Heart right ventricle (tissue), 16 donors: ENCODE measurements at regions of chr16 and their contacts with region 1.

Region 1: GRCh38 chr16:14309001-14309886 is 238.1 kb downstream of the MRTFB start:
- DNase-seq: no peak
- ATAC-seq: no peak
- H3K4me3 ChIP-seq: peak overlapping the region in 3 of 10 donors; percentile 2 to 8 (median 5)
- H3K27ac ChIP-seq: peak overlapping the region in 6 of 10 donors; percentile 19 to 77 (median 46)
- H3K4me1 ChIP-seq: peaks cover 0 to 71% (median 44%) of the 10 kb centered on the region in 9 donors
- H3K27me3 ChIP-seq: peaks cover 0 to 24% (median 0%) of the 10 kb centered on the region in 7 donors
- CTCF ChIP-seq: no peak

Region 2: DNA sequence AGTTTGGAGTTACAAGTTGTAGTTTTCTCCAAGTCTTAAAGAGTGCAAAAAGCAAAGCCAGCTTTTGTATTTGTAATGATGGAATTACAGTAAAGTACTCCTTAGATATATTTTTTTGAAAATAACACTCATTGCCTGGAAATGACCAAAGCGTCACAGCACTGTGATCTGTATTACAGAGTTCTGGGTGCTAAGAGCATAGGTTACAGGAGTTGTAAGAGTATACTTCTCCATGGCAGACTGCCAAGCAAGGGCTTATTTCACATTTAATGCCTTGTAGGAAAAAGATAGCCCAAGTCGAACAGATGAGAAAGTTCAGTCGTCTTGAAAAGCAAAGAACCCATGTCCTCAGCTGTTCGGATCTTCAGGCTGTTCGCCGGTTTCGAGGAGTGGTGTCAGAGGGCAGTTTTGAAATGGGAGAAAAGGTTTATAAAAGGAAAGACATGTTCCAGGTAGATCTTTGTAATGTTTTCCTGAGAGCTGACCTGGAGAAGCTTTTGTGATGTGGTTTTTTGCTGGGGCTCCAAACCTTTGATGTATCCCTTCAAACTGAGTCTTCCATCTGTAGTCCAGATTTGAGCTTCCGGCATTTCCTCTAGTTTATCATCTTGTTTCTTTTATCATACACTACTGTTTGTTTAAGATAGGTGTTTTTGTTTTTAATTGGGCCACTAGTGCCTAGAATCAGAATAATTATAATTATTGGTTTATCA is 348.0 kb before region 1 on chr16:
- intact Hi-C with region 1: no loop called
- DNase-seq: no peak
- ATAC-seq: no peak
- H3K4me3 ChIP-seq: no peak overlapping the region
- H3K27ac ChIP-seq: no peak overlapping the region
- H3K4me1 ChIP-seq: peaks cover 0 to 33% (median 15%) of the 10 kb centered on the region in 9 donors
- H3K27me3 ChIP-seq: no peaks in the 10 kb centered on the region
- CTCF ChIP-seq: no peak

Region 3: DNA sequence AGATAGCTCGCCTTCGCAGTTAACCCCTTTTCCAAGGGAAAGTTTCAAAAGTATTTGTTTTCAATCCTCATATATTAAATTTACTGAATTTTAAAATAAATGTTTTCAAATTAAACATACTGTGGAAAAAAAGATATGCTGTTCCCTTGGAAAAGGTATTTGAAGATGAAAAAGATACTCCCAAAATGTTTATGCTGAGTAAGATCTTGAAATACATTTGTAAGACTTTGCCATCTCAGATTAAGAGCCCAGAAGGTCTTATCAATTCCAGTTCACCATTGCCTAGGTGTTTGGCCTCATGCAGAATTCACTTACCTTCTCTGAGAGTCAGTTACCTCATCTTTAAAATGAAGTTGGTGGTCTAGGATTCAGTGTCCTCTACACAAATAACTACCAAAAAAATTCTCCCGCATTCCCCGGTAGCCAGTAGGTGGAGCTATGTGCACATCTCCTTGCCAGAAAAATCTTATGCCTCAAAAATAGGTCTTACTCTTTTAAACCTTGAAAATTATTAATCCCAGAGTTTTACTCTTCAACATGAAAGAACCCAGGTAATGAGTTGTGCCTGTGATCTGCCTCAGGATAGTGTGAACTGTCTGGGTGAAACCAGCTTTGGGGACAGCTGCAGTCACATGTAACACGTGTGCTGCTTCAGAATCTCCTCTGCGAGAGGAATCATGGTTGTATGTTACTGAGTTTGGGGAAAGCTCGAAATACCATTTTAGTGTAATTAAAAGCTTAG is 59.8 kb before region 1 on chr16:
- intact Hi-C with region 1: no loop called
- DNase-seq: peak in 1 of 2 donors; percentile 43
- ATAC-seq: peak in 1 of 8 donors; percentile 14
- H3K4me3 ChIP-seq: no peak overlapping the region
- H3K27ac ChIP-seq: no peak overlapping the region
- H3K4me1 ChIP-seq: no peaks in the 10 kb centered on the region
- H3K27me3 ChIP-seq: no peaks in the 10 kb centered on the region
- CTCF ChIP-seq: peak; percentile 62 to 89 (median 79)

Region 4: DNA sequence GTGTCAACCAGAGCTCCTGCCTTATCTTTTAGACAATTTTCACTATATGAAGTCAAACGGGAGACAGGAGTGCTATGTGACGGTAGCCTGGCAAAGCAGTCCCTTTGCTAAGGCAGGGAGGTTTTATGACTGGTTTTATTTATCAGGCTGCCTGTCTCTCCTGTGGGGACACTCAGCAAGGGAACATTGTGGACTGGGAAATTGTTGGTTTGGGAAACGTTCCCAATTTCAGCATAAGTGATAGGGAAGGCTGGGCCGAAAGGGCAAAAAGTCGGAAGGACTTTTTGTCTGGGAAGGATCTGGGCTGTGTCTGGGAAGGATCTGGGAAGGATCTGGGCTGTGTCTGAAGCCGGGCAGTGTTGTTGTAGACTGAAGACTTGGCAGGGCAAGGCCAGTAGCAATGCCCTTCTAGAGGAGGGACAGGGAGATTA is 109.6 kb after region 1 on chr16:
- intact Hi-C with region 1: loop called in 1 of 10 experiments (anchors 5 kb)
- DNase-seq: no peak
- ATAC-seq: peak in 7 of 8 donors; percentile 64 to 95 (median 72)
- H3K4me3 ChIP-seq: peak overlapping the region in 1 of 10 donors; percentile 5
- H3K27ac ChIP-seq: peak overlapping the region; percentile 42 to 83 (median 69)
- H3K4me1 ChIP-seq: peaks cover 0 to 26% (median 11%) of the 10 kb centered on the region in 9 donors
- H3K27me3 ChIP-seq: no peaks in the 10 kb centered on the region
- CTCF ChIP-seq: no peak

Region 5: DNA sequence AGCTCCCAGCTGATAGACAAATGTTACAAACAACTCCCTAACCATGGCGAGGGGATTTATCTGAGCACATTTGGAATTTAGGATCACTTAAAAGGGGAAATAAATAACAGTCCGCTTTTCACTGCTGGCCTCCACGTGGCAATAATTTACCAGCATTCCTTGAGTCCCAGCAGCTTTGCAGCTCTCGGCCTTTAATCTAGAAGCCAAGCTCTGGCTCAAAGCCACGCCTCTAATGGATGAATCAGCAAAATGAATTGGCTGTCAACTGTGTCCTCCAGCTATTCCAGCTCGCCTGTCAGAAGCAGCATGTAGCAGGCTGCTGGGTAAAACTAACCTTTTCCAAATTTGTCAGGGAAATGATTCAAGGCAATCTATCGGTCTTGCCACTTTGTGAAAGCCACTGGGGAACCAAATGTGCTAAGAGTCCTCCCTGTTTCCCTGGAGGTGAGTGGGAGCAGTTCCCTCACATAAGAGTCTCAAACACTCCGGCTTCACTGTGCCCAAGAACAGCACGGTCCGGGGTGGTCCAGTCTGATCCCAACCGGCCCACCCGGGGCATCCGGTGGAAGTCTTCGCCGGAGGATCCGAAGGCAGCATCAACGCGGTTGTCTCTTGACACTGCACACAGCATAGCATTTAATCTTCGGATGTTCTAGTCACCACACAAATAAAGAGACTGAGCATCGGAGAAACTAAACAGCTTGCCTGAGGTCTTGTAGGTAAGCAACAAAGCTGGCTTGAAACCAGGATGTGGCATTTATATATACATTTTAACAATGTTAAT is 177.5 kb after region 1 on chr16:
- intact Hi-C with region 1: loop called in 3 of 10 experiments (anchors 5 to 10 kb)
- DNase-seq: peak; percentile 53 to 87
- ATAC-seq: peak; percentile 85 to 89 (median 86)
- H3K4me3 ChIP-seq: peak overlapping the region in 9 of 10 donors; percentile 29 to 52 (median 48)
- H3K27ac ChIP-seq: peak overlapping the region; percentile 69 to 89 (median 79)
- H3K4me1 ChIP-seq: peaks cover 0 to 57% (median 32%) of the 10 kb centered on the region in 9 donors
- H3K27me3 ChIP-seq: no peaks in the 10 kb centered on the region
- CTCF ChIP-seq: no peak